ENCODE measurements at regions of chr11 and their contacts with region 1.

Region 1: GRCh38 chr11:60887556-60887955 is 18.8 kb downstream of the PRPF19 start:
- DNase-seq: peak; percentile 70 to 84 (median 81)
- H3K4me3 ChIP-seq: no peak overlapping the region
- H3K27ac ChIP-seq: no peak overlapping the region
- H3K4me1 ChIP-seq: peaks cover 0 to 31% (median 18%) of the 10 kb centered on the region in 4 experiments
- H3K27me3 ChIP-seq: no peaks in the 10 kb centered on the region

Region 2: GRCh38 chr11:60775420-60775961 is 112.1 kb before region 1 on chr11:
- CTCF ChIA-PET with region 1: interaction called, 68 read pairs
- POLR2A ChIA-PET with region 1: no interaction called
- DNase-seq: peak; percentile 95 to 98 (median 97)
- H3K4me3 ChIP-seq: no peak overlapping the region
- H3K27ac ChIP-seq: no peak overlapping the region
- H3K4me1 ChIP-seq: peaks cover 0 to 3% (median 0%) of the 10 kb centered on the region in 4 experiments
- H3K27me3 ChIP-seq: peaks cover 0 to 2% (median 0%) of the 10 kb centered on the region in 5 experiments

Region 3: GRCh38 chr11:60797846-60798630 is 89.5 kb before region 1 on chr11:
- CTCF ChIA-PET with region 1: no interaction called
- POLR2A ChIA-PET with region 1: no interaction called
- DNase-seq: no peak
- H3K4me3 ChIP-seq: no peak overlapping the region
- H3K27ac ChIP-seq: no peak overlapping the region
- H3K4me1 ChIP-seq: no peaks in the 10 kb centered on the region
- H3K27me3 ChIP-seq: peaks cover 0 to 3% (median 0%) of the 10 kb centered on the region in 5 experiments

Region 4: GRCh38 chr11:60841797-60842667 is 45.5 kb before region 1 on chr11 and contains the start of gene CCDC86:
- CTCF ChIA-PET with region 1: interaction called, 422 read pairs
- POLR2A ChIA-PET with region 1: no interaction called
- DNase-seq: peak; percentile 96 to 97 (median 96)
- H3K4me3 ChIP-seq: peak within 1 kb of the TSS; percentile 73 to 97 (median 87)
- H3K27ac ChIP-seq: peak within 1 kb of the TSS; percentile 44 to 74
- H3K4me1 ChIP-seq: peaks cover 15 to 41% (median 31%) of the 10 kb centered on the region in 4 experiments
- H3K27me3 ChIP-seq: no peaks in the 10 kb centered on the region

Region 5: GRCh38 chr11:60855726-60856633 is 31.6 kb before region 1 on chr11 and contains the start of gene PTGDR2:
- CTCF ChIA-PET with region 1: interaction called, 11 read pairs
- POLR2A ChIA-PET with region 1: no interaction called
- DNase-seq: peak in 2 of 3 donors; percentile 50 to 57
- H3K4me3 ChIP-seq: peak within 1 kb of the TSS in 5 of 7 experiments; percentile 17 to 44 (median 38)
- H3K27ac ChIP-seq: peak within 1 kb of the TSS in 1 of 2 experiments; percentile 43
- H3K4me1 ChIP-seq: peaks cover 8 to 56% (median 51%) of the 10 kb centered on the region in 4 experiments
- H3K27me3 ChIP-seq: no peaks in the 10 kb centered on the region

Region 6: GRCh38 chr11:60899046-60899936 is 11.7 kb after region 1 on chr11:
- CTCF ChIA-PET with region 1: interaction called, 102 read pairs
- POLR2A ChIA-PET with region 1: interaction called, 3 read pairs
- DNase-seq: peak; percentile 80 to 94 (median 94)
- H3K4me3 ChIP-seq: no peak overlapping the region
- H3K27ac ChIP-seq: peak overlapping the region; percentile 25 to 62
- H3K4me1 ChIP-seq: peaks cover 0 to 8% (median 4%) of the 10 kb centered on the region in 4 experiments
- H3K27me3 ChIP-seq: no peaks in the 10 kb centered on the region

Measured in common myeloid progenitor, CD34-positive (primary cell).